ENCODE measurements at regions of chr12 and their contacts with region 1.

Region 1: DNA sequence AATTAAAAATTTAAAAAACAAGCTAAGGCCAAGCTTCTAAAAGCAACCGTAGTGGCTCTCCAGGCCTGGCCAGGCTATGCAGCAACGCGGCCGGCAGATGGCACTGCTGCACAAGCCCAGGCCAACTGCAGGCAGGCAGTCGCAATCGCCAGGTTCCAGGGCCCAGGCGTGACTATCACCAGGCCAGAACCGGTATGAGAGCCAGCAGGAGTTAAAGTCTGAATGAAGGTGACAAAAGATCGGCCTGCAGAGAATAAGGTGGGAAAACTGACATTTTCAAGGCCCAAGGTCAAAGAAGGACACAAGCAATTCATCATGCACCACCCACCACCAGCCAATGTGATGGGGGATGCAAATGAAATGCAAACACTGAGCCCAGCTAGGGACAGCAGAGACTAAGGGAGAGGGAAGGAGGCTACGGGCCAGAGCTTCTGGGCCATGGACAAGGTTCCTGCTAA is 43.6 kb upstream of the ANO2 start:
- DNase-seq: peak; percentile 69 to 88 (median 81)
- H3K4me3 ChIP-seq: no peak overlapping the region
- H3K27ac ChIP-seq: no peak overlapping the region
- H3K4me1 ChIP-seq: no peaks in the 10 kb centered on the region
- H3K27me3 ChIP-seq: no peaks in the 10 kb centered on the region

Region 2: GRCh38 chr12:5973461-5974130 is 15.1 kb before region 1 on chr12:
- CTCF ChIA-PET with region 1: interaction called, 25 read pairs
- POLR2A ChIA-PET with region 1: no interaction called
- DNase-seq: no peak
- H3K4me3 ChIP-seq: no peak overlapping the region
- H3K27ac ChIP-seq: no peak overlapping the region
- H3K4me1 ChIP-seq: no peaks in the 10 kb centered on the region
- H3K27me3 ChIP-seq: no peaks in the 10 kb centered on the region

Region 3: DNA sequence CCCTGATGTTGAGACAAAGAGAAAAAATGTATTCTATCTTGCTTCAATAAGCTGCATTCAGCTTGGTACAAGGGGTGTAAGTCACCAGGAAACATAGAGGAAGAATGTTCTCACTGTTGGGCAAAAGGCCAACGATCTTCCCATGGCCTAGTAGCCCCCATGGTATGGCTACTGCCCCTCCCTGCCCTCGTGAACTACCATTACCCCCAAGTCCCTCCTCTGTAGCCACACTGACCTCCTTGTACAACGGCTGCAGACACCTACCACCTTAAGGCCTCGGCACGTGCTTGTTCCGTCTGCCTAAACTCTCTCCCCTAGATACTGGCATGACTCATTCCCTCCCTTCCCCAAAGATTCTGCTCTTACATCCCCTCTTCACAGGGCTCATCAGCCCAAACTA is 38.3 kb after region 1 on chr12:
- CTCF ChIA-PET with region 1: interaction called, 265 read pairs
- POLR2A ChIA-PET with region 1: interaction called, 4 read pairs
- DNase-seq: no peak
- H3K4me3 ChIP-seq: no peak overlapping the region
- H3K27ac ChIP-seq: no peak overlapping the region
- H3K4me1 ChIP-seq: peaks cover 0 to 12% (median under 1%) of the 10 kb centered on the region in 4 experiments
- H3K27me3 ChIP-seq: no peaks in the 10 kb centered on the region

Region 4: GRCh38 chr12:6047249-6048237 is 58.9 kb after region 1 on chr12:
- CTCF ChIA-PET with region 1: interaction called, 22 read pairs
- POLR2A ChIA-PET with region 1: no interaction called
- DNase-seq: no peak
- H3K4me3 ChIP-seq: no peak overlapping the region
- H3K27ac ChIP-seq: no peak overlapping the region
- H3K4me1 ChIP-seq: peaks cover 0 to 4% (median 0%) of the 10 kb centered on the region in 4 experiments
- H3K27me3 ChIP-seq: no peaks in the 10 kb centered on the region

Region 5: GRCh38 chr12:6285063-6285477 is 296.4 kb after region 1 on chr12:
- CTCF ChIA-PET with region 1: interaction called, 33 read pairs
- POLR2A ChIA-PET with region 1: no interaction called
- DNase-seq: peak; percentile 66 to 76 (median 68)
- H3K4me3 ChIP-seq: no peak overlapping the region
- H3K27ac ChIP-seq: no peak overlapping the region
- H3K4me1 ChIP-seq: peaks cover 0 to 10% (median 0%) of the 10 kb centered on the region in 4 experiments
- H3K27me3 ChIP-seq: no peaks in the 10 kb centered on the region

Measured in common myeloid progenitor, CD34-positive (primary cell).